Sigmoid colon (tissue), 7 donors: ENCODE measurements at regions of chr18 and their contacts with region 1.

Region 1: GRCh38 chr18:61893971-61894750 is 1.4 kb upstream of the RNF152 start:
- DNase-seq: peak; percentile 86
- H3K4me3 ChIP-seq: peak overlapping the region; percentile 69 to 97 (median 79)
- H3K27ac ChIP-seq: peak overlapping the region; percentile 59 to 82 (median 72)
- H3K4me1 ChIP-seq: peaks cover 0 to 42% (median 33%) of the 10 kb centered on the region in 4 donors
- H3K27me3 ChIP-seq: no peaks in the 10 kb centered on the region
- CTCF ChIP-seq: no peak
- EP300 ChIP-seq: no peak
- POLR2A ChIP-seq: peak in 1 of 2 donors; percentile 14

Region 2: GRCh38 chr18:61581578-61582201 is 312.5 kb before region 1 on chr18:
- intact Hi-C with region 1: loop called (anchors 5 kb)
- DNase-seq: peak; percentile 80
- H3K4me3 ChIP-seq: peak overlapping the region in 3 of 4 donors; percentile 16 to 28 (median 25)
- H3K27ac ChIP-seq: peak overlapping the region in 2 of 4 donors; percentile 11 to 66
- H3K4me1 ChIP-seq: peaks cover 0 to 15% (median 6%) of the 10 kb centered on the region in 4 donors
- H3K27me3 ChIP-seq: no peaks in the 10 kb centered on the region
- CTCF ChIP-seq: peak; percentile 61 to 98 (median 84)
- EP300 ChIP-seq: no peak
- POLR2A ChIP-seq: no peak

Region 3: GRCh38 chr18:61635901-61636528 is 258.1 kb before region 1 on chr18:
- intact Hi-C with region 1: loop called (anchors 2 kb)
- DNase-seq: peak; percentile 68
- H3K4me3 ChIP-seq: no peak overlapping the region
- H3K27ac ChIP-seq: peak overlapping the region in 1 of 4 donors; percentile 15
- H3K4me1 ChIP-seq: no peaks in the 10 kb centered on the region
- H3K27me3 ChIP-seq: no peaks in the 10 kb centered on the region
- CTCF ChIP-seq: peak; percentile 36 to 79 (median 74)
- EP300 ChIP-seq: no peak
- POLR2A ChIP-seq: no peak

Region 4: DNA sequence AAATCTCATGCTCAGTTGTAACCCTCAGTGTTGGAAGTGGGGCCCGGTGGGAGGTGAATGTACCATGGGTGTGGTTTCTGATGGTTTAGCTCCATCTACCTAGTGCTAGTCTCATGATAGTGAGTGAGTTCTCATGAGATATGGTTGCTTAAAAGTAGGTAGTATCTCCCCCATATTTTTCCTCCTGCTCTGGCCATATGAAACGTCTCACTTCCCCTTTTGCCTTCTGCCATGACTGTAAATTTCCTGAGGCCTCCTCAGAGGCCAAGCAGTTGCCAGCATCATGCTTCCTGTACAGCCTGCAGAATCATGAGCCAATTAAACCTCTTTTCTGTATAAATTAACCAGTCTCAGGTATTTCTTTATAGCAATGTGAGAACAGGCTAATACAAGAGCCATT is 61.5 kb after region 1 on chr18:
- intact Hi-C with region 1: loop called (anchors 1 kb)
- DNase-seq: no peak
- H3K4me3 ChIP-seq: no peak overlapping the region
- H3K27ac ChIP-seq: no peak overlapping the region
- H3K4me1 ChIP-seq: peaks cover 0 to 17% (median 13%) of the 10 kb centered on the region in 4 donors
- H3K27me3 ChIP-seq: no peaks in the 10 kb centered on the region
- CTCF ChIP-seq: no peak
- EP300 ChIP-seq: no peak
- POLR2A ChIP-seq: no peak